ENCODE measurements at regions of chr12 and their contacts with region 1.

Region 1: DNA sequence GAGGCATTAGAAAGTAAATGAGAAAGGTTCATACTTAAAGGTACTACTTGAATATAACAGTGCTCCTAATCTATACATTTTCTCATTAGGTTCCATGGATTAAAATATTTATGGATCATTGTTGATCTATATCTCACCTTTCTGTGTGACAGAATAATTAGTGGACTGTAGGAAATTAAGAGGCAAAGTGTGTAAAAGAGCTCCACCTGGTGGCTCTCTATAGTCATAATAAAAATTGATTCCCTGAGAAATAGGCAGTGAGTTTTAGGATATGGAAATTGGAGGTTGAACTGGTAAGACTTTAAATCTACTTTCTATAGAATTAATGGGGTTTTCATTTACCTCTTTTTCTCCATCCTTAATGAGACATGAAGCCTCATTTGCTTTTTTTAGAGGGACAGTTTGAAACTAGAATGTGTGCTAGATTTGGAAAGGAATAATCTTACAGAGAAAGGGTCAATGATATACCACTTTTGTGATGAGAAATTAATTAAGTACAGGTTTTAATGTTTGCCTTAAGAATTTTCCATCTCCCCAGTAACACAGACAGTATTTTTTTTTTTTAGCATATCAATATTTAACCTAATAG is 11.8 kb upstream of the DERA start:
- DNase-seq: no peak
- H3K4me3 Mint-ChIP-seq: no peak overlapping the region
- H3K27ac Mint-ChIP-seq: no peak overlapping the region
- H3K4me1 Mint-ChIP-seq: peaks cover 4% of the 10 kb centered on the region
- H3K27me3 Mint-ChIP-seq: no peaks in the 10 kb centered on the region

Region 2: DNA sequence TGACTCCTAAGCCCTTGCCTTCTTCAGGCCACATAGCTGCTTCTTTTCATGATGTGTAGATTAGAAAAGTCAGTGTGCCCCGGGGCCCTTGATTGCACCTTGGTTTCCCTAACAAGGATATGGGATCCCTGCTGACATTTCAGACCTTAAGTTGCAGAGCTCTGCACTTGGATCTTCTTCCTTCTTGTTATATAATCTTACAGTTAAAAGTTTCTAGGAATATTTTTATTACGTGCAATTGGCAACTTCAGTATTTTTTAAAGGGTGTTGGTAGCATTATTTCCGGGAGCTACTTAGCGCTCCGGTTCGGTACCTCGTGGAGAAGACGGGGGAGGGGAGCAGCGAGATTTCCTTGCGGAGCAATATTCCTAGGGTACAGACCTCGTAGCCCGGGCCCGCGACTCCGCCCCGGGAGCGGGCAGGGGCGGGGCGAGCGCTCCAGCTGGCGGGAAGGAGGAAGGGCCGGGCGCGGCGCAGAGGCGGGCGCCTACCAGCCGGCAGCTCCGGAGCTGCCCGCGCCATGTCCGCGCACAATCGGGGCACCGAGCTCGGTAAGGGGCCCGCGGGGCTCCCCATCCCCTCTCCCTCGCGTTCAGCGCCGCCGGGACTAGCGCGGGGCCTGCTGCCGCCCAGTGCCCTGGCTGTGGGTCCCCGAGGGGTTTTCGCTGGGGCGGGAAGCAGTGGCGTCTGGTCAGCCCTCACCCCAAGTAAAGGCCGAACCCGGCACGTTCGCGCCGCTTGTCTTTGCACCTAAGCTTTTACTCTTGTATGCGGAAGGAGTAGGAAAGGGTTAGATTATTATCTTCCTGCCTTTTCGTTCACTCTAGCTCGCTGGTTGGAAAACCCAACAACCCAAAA is 11.7 kb after region 1 on chr12 and contains the start of gene DERA:
- CTCF ChIA-PET with region 1: interaction called, 29 read pairs
- intact Hi-C with region 1: no loop called
- DNase-seq: peak; percentile 63
- H3K4me3 Mint-ChIP-seq: peak within 1 kb of the TSS; percentile 84
- H3K27ac Mint-ChIP-seq: peak within 1 kb of the TSS; percentile 80
- H3K4me1 Mint-ChIP-seq: peaks cover 10% of the 10 kb centered on the region
- H3K27me3 Mint-ChIP-seq: no peaks in the 10 kb centered on the region
- total RNA-seq, gene DERA: 29.8 to 31.0 TPM